Panc1 (cell line): ENCODE measurements at regions of chr5 and their contacts with region 1.

Region 1: DNA sequence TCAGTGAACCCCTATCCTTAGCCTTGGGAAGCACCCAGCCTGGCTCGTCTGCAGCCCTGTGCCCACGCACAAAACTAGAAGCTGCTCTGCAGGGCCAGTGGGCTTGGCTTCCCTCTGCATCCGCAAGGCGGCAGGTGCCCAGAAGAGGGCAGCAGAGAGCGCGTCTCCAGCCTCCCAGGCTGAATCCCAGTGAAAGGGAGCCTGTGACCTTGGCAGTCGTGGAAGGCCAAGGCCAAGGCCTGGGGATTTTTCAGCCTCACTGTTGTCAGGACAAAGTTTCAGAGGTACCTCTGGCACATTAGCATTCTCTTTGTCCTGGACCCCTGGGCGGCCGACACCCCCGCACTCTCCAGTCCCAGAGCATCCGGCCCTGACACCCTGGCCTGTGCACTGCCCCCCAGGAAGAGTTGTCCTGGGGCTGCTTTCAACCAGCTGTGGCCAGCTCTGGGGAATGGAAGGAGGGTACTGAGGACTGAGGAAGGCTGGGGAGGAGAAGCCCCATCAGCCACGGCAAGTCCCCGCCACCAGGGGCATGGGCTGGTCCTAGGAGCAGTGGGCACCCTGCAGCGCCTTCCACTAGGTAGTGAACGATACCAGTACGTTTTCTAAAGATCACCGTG is 63.6 kb upstream of the IL17B start:
- DNase-seq: peak; percentile 68
- ATAC-seq: peak; percentile 87
- H3K4me3 ChIP-seq: no peak overlapping the region
- H3K27ac ChIP-seq: peak overlapping the region; percentile 78
- H3K4me1 ChIP-seq: peaks cover 36% of the 10 kb centered on the region
- H3K27me3 ChIP-seq: no peaks in the 10 kb centered on the region
- CTCF ChIP-seq: peak; percentile 97

Region 2: DNA sequence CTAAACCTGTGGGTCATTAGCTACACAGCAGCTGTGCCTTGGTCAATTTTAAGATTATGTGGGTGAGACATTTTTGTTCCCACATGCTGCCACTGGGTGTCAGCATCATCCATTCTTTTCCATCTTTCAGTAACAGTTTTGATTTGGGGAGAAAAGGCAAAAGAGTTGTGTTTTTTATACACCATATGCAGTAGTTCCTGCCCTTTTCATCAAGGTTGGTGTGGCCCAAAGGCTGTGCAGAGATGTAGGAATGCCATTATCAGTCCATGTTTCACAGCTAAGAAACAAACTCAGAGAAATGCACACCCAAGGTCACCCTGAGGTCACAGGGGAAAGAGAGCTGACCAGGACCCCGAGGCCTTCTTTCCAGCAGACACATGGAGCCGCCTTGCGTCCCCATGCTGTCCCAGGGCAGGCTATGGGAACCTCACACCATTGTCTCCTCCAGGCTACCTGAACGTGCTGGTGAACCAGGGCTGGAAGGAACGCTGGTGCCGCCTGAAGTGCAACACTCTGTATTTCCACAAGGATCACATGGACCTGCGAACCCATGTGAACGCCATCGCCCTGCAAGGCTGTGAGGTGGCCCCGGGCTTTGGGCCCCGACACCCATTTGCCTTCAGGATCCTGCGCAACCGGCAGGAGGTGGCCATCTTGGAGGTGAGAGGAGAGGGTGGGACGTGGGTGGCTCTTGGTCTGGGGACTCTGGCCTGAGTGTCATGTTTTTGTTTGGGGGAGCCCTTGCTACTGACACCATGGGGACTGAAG is 125.2 kb before region 1 on chr5:
- CTCF ChIA-PET with region 1: interaction called, 3 read pairs
- POLR2A ChIA-PET with region 1: no interaction called
- in situ Hi-C with region 1: no loop called
- intact Hi-C with region 1: loop called (anchors 5 kb)
- DNase-seq: peak; percentile 30
- ATAC-seq: peak; percentile 75
- H3K4me3 ChIP-seq: no peak overlapping the region
- H3K27ac ChIP-seq: no peak overlapping the region
- H3K4me1 ChIP-seq: no peaks in the 10 kb centered on the region; the same call in 1 of the 2 replicates
- H3K27me3 ChIP-seq: no peaks in the 10 kb centered on the region
- CTCF ChIP-seq: peak; percentile 82

Region 3: GRCh38 chr5:149378241-149378820 is 64.3 kb before region 1 on chr5:
- CTCF ChIA-PET with region 1: no interaction called
- POLR2A ChIA-PET with region 1: no interaction called
- in situ Hi-C with region 1: no loop called
- intact Hi-C with region 1: no loop called
- DNase-seq: no peak
- ATAC-seq: no peak
- H3K4me3 ChIP-seq: no peak overlapping the region
- H3K27ac ChIP-seq: no peak overlapping the region
- H3K4me1 ChIP-seq: 0 out of 2 replicates have a peak, but pooled peaks cover 3% of the 10 kb centered on the region
- H3K27me3 ChIP-seq: no peaks in the 10 kb centered on the region
- CTCF ChIP-seq: no peak

Region 4: GRCh38 chr5:149392718-149393117 is 50.0 kb before region 1 on chr5:
- CTCF ChIA-PET with region 1: no interaction called
- POLR2A ChIA-PET with region 1: no interaction called
- in situ Hi-C with region 1: no loop called
- intact Hi-C with region 1: no loop called
- DNase-seq: no peak
- ATAC-seq: peak; percentile 63; the same call in 1 of the 2 replicates
- H3K4me3 ChIP-seq: no peak overlapping the region
- H3K27ac ChIP-seq: no peak overlapping the region
- H3K4me1 ChIP-seq: no peaks in the 10 kb centered on the region
- H3K27me3 ChIP-seq: no peaks in the 10 kb centered on the region
- CTCF ChIP-seq: no peak

Region 5: DNA sequence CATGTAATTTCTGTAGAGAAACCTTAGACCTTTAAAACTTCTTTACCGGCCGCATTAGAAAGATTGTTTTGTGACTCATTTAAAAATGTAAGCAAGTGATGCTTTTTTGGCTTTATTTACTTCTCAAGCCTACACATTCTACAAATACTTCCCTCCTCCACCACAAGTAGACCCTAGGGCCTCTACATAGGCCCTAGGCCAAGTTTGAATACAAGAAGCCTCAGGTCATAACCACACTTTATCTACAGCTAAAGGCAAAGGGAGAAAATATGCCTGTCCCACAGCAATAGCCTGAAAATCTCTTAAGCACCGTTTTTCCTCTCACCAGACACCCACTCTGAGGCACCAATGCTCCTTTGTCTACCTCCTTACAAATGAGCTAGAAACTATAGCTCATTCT is 54.7 kb after region 1 on chr5:
- CTCF ChIA-PET with region 1: interaction called, 15 read pairs
- POLR2A ChIA-PET with region 1: no interaction called
- in situ Hi-C with region 1: no loop called
- intact Hi-C with region 1: no loop called
- DNase-seq: no peak
- ATAC-seq: peak; percentile 93
- H3K4me3 ChIP-seq: no peak overlapping the region
- H3K27ac ChIP-seq: peak overlapping the region; percentile 67
- H3K4me1 ChIP-seq: peaks cover 51% of the 10 kb centered on the region
- H3K27me3 ChIP-seq: no peaks in the 10 kb centered on the region
- CTCF ChIP-seq: no peak

Region 6: DNA sequence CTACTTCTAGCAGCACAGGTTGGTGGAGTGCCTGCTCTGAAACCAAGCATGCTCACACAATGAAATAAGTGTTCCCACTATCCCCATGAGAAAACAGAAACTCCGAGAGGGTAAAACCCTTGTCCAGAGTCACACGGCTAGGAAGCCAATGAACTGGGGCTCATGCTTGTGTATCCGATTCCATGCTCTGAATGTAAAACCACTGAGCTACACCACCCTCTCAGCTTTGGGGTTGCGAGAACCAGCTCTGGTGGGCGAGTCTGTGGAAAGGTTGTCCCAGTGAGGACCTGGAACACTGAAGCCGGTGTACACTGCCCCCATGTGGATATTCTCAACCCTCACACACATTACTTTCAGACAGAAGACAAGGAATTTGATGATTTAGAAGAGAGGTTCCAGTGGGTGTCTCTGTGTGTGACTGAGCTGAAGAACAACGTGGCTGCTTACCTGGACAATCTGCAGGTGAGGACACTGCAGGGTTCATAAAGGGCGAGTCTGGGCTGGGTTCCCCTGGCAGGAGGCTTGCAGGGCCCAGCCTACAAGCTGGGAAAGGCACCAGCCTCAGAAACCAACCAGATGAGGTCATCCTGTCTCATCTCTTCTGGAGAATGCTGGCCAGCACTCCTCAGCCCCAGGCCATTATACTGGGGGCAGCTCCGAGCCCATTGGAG is 176.0 kb after region 1 on chr5:
- CTCF ChIA-PET with region 1: interaction called, 3 read pairs
- POLR2A ChIA-PET with region 1: no interaction called
- in situ Hi-C with region 1: no loop called
- intact Hi-C with region 1: loop called (anchors 5 kb)
- DNase-seq: peak; percentile 60
- ATAC-seq: peak; percentile 90
- H3K4me3 ChIP-seq: no peak overlapping the region
- H3K27ac ChIP-seq: peak overlapping the region; percentile 15; the same call in 1 of the 2 replicates
- H3K4me1 ChIP-seq: peaks cover 5% of the 10 kb centered on the region; the same call in 1 of the 2 replicates
- H3K27me3 ChIP-seq: no peaks in the 10 kb centered on the region
- CTCF ChIP-seq: peak; percentile 89